ENCODE measurements at regions of chr3 and their contacts with region 1.

Region 1: DNA sequence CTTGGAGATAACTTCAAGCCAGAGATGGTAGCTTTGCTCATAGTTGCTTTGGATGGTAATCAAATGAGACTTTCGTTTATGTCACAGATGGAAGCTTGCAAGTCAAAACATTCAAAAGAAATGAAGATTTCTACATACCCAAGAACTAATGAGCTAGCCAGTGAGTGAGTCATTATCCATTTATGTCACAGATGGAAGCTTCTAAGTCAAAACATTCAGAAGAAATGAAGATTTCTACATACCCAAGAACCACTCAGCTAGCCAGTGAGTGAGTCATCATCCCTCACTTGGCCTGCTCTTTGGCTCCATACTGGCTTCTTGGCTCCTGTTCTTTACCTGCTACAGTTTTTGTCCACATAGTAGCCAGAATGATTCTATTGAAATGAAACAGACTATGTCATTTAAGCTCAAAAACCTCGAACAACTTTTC is 559.8 kb upstream of the CBLB start:
- DNase-seq: peak; percentile 97
- H3K4me3 Mint-ChIP-seq: no peak overlapping the region
- H3K27ac Mint-ChIP-seq: peak overlapping the region; percentile 52
- H3K4me1 Mint-ChIP-seq: peaks cover 27% of the 10 kb centered on the region
- H3K27me3 Mint-ChIP-seq: no peaks in the 10 kb centered on the region
- CTCF ChIP-seq: no peak

Region 2: DNA sequence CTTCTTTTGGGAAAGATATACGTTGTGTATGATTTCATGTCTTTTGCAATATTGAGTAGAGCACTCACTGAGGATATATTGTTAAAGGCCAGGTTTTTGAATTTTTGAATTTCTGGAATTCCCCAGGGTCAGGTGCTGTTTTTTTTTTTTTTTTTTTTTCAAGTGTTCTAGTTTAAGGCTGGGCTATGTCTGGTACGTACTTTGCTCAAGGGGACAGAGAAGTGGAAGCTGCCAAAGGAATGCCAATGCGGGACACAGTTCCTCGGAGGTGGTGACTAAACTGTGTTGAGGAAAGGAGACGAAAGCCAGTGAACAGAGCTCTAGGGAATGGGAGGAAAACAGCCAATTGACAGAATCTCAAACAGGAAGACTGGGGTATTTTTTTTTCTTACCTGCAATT is 49.3 kb before region 1 on chr3:
- CTCF ChIA-PET with region 1: no interaction called
- POLR2A ChIA-PET with region 1: interaction called, 12 read pairs
- intact Hi-C with region 1: no loop called
- DNase-seq: peak; percentile 75
- H3K4me3 Mint-ChIP-seq: no peak overlapping the region
- H3K27ac Mint-ChIP-seq: peak overlapping the region; percentile 92
- H3K4me1 Mint-ChIP-seq: peaks cover 18% of the 10 kb centered on the region
- H3K27me3 Mint-ChIP-seq: no peaks in the 10 kb centered on the region
- CTCF ChIP-seq: no peak

Region 3: DNA sequence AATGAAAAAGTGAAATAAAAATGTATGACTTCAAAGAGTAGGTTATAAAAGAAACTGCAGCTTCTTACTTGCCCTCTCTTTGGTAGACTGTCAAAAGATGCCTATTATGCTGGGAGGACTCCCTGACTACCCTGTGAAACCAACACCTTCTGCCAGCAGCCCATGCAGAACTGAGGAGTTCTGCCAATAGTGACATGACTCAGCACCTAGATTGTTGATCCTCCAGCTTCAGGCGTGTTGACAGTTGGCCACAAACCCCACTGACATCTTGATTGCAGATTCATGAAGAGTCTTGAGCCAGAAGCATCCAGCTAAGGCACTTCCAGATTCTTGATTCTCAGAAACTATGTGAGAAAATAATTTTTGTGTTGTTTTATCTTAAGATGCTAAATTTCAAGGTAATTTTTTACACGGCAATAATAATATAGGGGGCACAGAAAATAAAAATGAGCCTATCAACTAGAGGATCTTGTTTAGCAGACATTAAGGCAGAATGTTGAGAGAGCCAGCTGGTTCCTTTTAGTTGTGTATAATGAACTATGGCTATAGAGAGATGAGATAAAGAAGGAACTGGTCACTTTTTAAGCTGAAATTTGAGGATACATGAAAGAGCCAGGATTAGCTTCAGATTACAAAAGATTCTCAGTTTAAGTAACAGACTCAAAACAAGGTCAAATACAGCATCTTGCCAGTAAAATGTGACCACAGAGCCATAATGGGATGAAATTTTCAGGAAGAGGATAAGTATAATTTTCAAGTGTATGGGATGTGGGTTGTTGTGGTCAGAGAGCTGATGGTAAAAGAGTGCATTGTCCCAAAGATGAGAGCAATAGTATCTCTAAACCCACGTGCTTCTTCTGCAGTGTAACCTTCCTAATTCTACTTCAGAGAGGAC is 29.0 kb after region 1 on chr3:
- CTCF ChIA-PET with region 1: interaction called, 3 read pairs
- POLR2A ChIA-PET with region 1: interaction called, 10 read pairs
- intact Hi-C with region 1: loop called (anchors 2 kb)
- DNase-seq: peak; percentile 97
- H3K4me3 Mint-ChIP-seq: no peak overlapping the region
- H3K27ac Mint-ChIP-seq: peak overlapping the region; percentile 76
- H3K4me1 Mint-ChIP-seq: peaks cover 14% of the 10 kb centered on the region
- H3K27me3 Mint-ChIP-seq: no peaks in the 10 kb centered on the region
- CTCF ChIP-seq: no peak